Activated CD8-positive, alpha-beta memory T cell treated with anti-CD3 and anti-CD28 coated beads, Interleukin-2, amount 10 ng/mL, durations not matched to agents 7 days and 5 days (primary cell): ENCODE measurements at regions of chr5 and their contacts with region 1.

Region 1: DNA sequence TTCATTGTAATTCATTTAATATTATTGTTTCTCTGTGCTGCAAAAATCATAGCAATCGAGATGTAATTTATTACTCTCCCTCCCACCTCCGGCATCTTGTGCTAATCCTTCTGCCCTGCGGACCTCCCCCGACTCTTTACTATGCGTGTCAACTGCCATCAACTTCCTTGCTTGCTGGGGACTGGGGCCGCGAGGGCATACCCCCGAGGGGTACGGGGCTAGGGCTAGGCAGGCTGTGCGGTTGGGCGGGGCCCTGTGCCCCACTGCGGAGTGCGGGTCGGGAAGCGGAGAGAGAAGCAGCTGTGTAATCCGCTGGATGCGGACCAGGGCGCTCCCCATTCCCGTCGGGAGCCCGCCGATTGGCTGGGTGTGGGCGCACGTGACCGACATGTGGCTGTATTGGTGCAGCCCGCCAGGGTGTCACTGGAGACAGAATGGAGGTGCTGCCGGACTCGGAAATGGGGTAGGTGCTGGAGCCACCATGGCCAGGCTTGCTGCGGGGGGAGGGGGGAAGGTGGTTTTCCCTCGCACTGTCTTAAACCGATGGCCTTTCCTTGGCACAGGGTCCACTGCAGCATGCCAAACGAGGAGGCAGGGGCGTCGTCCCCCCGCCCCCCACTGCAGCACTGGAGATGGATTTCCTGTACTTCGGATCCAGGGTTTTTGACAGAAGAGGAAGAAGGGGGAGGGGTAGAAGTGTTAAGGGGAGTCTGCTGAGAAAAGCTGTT is at the start of gene APC:
- DNase-seq: peak; percentile 92
- ATAC-seq: peak; percentile 99
- H3K4me3 Mint-ChIP-seq: peak within 1 kb of the TSS; percentile 90
- H3K27ac Mint-ChIP-seq: peak within 1 kb of the TSS; percentile 79
- H3K4me1 Mint-ChIP-seq: peaks cover 17% of the 10 kb centered on the region
- H3K27me3 Mint-ChIP-seq: no peaks in the 10 kb centered on the region
- total RNA-seq, gene APC: 22.9 to 26.2 TPM

Region 2: GRCh38 chr5:112707187-112708102 is 30.2 kb before region 1 on chr5:
- CTCF ChIA-PET with region 1: interaction called, 11 read pairs
- DNase-seq: peak; percentile 99
- ATAC-seq: peak; percentile 96
- H3K4me3 Mint-ChIP-seq: peak overlapping the region; percentile 95
- H3K27ac Mint-ChIP-seq: peak overlapping the region; percentile 87
- H3K4me1 Mint-ChIP-seq: peaks cover 31% of the 10 kb centered on the region
- H3K27me3 Mint-ChIP-seq: no peaks in the 10 kb centered on the region